Kidney (tissue), 22 donors: ENCODE measurements at regions of chr3 and their contacts with region 1.

Region 1: DNA sequence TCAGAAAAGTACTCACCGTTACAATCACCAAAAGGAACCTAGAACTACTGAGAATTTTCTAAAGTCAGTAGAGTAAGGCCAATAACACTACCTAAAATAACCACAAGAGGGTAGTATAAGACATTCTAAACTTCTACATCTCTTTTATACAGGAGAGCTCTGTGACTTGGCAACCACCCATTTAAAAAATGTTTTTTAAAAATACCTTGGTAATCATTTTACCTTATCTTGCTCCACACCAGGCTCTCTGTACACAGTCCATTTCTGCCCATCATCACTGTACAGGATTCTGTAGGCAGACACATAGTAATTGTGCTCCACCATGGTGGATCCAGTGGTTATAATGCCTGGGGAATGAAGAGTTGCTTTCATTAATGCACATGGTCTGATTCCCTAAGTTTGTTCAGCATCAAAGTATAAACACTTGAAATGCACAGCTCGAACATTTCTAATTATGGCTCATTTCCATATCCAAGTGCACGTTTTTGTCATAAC is 54.5 kb downstream of the ST3GAL6 start:
- DNase-seq: peak in 2 of 5 donors; percentile 65 to 71
- H3K4me3 ChIP-seq: no peak overlapping the region
- H3K27ac ChIP-seq: no peak overlapping the region
- H3K4me1 ChIP-seq: no peaks in the 10 kb centered on the region
- H3K27me3 ChIP-seq: no peaks in the 10 kb centered on the region
- CTCF ChIP-seq: peak; percentile 58

Region 2: DNA sequence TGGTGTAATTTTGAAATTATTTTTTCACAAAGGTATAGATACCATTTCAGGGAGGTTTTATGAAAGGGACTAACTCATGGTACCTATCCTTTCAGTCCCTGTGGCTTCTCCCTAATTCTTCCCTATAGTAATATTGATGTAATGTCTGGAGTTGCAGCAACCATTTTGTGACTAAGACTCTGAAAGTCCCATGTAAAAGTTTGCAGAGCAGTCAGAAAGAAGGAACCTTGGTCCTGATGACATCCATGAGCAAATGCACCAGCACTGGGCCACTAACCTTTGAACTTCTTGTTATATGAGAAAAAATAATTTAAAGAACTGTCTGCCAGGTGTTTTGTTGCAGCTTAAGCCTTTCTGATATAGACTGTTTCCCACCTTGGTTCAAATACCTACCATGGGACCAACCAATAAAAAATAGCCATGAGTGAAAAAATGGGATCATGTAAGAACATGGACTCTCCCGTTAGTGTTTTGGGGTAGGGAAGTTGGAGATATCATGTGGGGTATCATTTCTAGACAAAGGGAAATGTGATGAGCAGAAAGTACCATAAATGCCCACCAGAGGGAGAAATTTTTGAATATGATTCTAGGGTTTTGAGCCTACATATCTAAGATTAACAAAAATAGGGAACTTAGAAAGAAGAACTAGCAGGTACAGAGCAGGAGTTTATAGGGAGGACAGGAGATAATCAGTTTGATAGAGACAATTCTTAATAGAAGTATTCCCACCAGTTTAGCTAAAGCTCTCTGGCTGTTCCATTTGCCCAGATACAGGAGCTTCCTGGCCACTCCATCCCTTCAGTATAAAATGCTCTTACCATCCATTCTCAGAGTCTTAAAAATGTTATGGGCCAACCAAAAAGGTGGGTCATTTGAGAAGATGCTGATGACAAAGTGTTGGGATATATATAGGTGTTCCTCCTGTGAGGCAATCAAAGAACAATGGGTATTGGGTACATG is 220.8 kb before region 1 on chr3:
- intact Hi-C with region 1: loop called (anchors 5 kb)
- DNase-seq: peak in 2 of 5 donors; percentile 26
- H3K4me3 ChIP-seq: no peak overlapping the region
- H3K27ac ChIP-seq: no peak overlapping the region
- H3K4me1 ChIP-seq: peaks cover 0 to 7% (median 3%) of the 10 kb centered on the region in 3 donors
- H3K27me3 ChIP-seq: no peaks in the 10 kb centered on the region
- CTCF ChIP-seq: peak; percentile 36

Region 3: GRCh38 chr3:98930413-98930812 is 112.8 kb after region 1 on chr3:
- intact Hi-C with region 1: no loop called
- DNase-seq: no peak
- H3K4me3 ChIP-seq: no peak overlapping the region
- H3K27ac ChIP-seq: no peak overlapping the region
- H3K4me1 ChIP-seq: no peaks in the 10 kb centered on the region
- H3K27me3 ChIP-seq: no peaks in the 10 kb centered on the region
- CTCF ChIP-seq: no peak

Region 4: DNA sequence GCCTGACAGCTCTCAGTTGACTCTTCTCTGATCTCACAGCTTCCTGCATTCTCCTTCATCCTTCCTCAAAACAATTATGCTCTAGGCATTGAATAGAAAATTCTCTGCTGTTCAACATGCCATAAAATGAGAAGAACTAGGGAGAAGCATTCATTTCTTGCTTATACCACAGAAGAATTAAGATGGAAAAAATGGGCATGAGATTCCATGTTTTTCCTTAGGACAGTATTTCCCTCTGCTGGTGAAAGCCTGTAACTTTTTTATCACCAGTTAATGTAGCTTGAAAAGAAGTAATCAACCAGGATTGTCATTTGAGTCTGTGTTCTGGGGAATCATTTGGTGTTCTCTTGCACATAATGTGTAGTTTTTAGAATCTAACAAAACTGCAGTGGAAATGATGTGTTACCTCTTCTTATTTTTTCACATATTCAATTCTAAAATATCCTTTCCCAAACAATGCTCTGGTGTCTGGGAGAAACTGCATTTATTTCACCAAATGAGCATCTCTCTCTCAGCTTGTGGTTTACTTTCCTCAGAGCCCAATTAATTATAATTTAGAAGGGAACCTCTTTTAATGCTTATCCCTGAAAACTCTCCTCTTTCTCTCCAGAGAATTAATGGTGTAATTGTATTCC is 176.7 kb after region 1 on chr3:
- intact Hi-C with region 1: loop called (anchors 5 kb)
- DNase-seq: peak in 2 of 5 donors; percentile 37 to 59
- H3K4me3 ChIP-seq: no peak overlapping the region
- H3K27ac ChIP-seq: no peak overlapping the region
- H3K4me1 ChIP-seq: no peaks in the 10 kb centered on the region
- H3K27me3 ChIP-seq: no peaks in the 10 kb centered on the region
- CTCF ChIP-seq: peak; percentile 61